HepG2 (cell line): ENCODE measurements at regions of chr1 and their contacts with region 1.

Region 1: GRCh38 chr1:15430787-15431570 is 7.3 kb upstream of the CTRC start:
- DNase-seq: no peak
- ATAC-seq: peak; percentile 75
- H3K4me3 ChIP-seq: no peak overlapping the region
- H3K27ac ChIP-seq: no peak overlapping the region
- H3K4me1 ChIP-seq: peaks cover 9% of the 10 kb centered on the region; the same call in 1 of the 2 replicates
- H3K27me3 ChIP-seq: no peaks in the 10 kb centered on the region
- CTCF ChIP-seq: peak; percentile 98
- EP300 ChIP-seq: no peak
- POLR2A ChIP-seq: no peak
- RAD21 ChIP-seq: peak; percentile 93

Region 2: GRCh38 chr1:15323351-15323988 is 107.5 kb before region 1 on chr1:
- CTCF ChIA-PET with region 1: interaction called, 47 read pairs
- POLR2A ChIA-PET with region 1: no interaction called
- in situ Hi-C with region 1: loop called (anchors 5 kb)
- intact Hi-C with region 1: loop called (anchors 1 kb)
- DNase-seq: peak; percentile 42
- ATAC-seq: peak; percentile 90
- H3K4me3 ChIP-seq: no peak overlapping the region
- H3K27ac ChIP-seq: no peak overlapping the region
- H3K4me1 ChIP-seq: peaks cover 9% of the 10 kb centered on the region; the same call in 1 of the 2 replicates
- H3K27me3 ChIP-seq: peaks cover 5 to 30% of the 10 kb centered on the region in 2 experiments; a peak in 3 of 5 replicates
- CTCF ChIP-seq: peak; percentile 94
- EP300 ChIP-seq: no peak
- POLR2A ChIP-seq: no peak
- RAD21 ChIP-seq: peak; percentile 79

Region 3: GRCh38 chr1:15328351-15329103 is 102.5 kb before region 1 on chr1:
- CTCF ChIA-PET with region 1: interaction called, 47 read pairs
- POLR2A ChIA-PET with region 1: no interaction called
- in situ Hi-C with region 1: loop called (anchors 5 kb)
- intact Hi-C with region 1: loop called (anchors 1 kb)
- DNase-seq: no peak
- ATAC-seq: no peak
- H3K4me3 ChIP-seq: no peak overlapping the region
- H3K27ac ChIP-seq: no peak overlapping the region
- H3K4me1 ChIP-seq: peaks cover 9% of the 10 kb centered on the region; the same call in 1 of the 2 replicates
- H3K27me3 ChIP-seq: peaks cover 5 to 30% of the 10 kb centered on the region in 2 experiments; a peak in 2 of 5 replicates
- CTCF ChIP-seq: no peak
- EP300 ChIP-seq: no peak
- POLR2A ChIP-seq: no peak
- RAD21 ChIP-seq: no peak